HEK293T (cell line): ENCODE measurements at regions of chr2 and their contacts with region 1.

Region 1: GRCh38 chr2:65604245-65604644 is 171.8 kb upstream of the SPRED2 start:
- DNase-seq: no peak

Region 2: DNA sequence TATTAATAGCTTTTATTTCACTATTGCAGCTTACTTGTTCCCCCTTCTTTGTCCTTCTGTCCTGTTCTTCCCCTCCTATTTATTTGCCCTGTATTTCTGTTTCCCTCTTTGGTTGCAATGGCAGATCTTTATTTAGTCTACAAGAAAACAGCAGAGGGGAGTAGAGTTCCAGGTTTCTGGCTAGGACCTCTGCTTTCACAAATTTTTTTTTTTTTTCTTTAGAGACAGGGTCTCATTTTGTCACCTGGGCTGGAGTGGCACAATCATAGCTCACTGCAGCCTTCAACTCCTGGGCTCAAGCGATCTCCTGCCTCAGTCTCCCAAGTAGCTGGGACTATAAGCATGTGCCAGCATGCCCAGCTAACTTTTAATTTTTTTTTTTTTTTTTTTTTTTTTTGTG is 16.3 kb after region 1 on chr2:
- CTCF ChIA-PET with region 1: interaction called, 11 read pairs
- POLR2A ChIA-PET with region 1: no interaction called
- DNase-seq: no peak